Left cardiac atrium (tissue), 4 donors: ENCODE measurements at regions of chr9 and their contacts with region 1.

Region 1: DNA sequence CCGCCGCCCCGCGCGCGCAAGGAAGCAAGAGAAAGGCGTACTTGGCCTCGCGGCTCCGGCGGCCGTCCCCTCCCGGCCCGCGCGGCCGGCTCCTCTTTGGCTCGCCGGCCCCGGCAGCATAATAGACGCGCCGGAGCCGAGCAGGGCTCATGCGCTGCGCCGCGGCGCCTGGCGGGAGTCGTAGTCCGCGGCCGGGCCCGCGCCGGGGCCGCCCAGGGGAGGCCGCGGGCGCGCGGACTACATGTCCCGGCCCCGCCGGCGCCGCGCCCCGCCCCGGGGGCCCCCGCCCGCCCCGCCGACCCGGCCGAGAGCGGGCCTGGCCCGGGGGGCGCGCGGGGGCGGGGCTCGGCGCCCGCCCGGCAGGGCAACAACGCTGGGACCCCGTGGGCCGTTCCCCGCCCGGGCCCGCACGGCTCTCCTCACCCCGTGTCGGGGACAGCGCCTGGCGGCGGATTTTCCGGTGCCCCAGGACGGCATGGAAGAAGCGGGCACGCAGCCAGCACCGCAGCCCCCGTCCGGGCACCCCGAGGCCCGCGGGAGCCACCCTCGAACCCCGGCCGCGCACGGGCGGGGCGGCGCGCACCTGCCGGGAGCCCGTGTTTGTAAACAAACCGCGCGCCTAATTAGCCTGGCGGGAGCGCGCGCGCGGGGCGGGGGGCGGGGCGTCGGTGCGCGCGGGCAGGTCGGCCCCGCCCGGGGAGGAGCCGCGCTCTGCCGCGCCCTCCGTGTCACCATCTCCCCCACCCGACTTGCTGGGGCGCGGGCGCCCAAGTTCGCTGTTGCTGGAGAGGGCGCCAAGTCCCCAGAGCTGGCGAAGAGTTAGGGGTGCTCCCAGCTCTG is at the start of gene BRD3:
- DNase-seq: peak; percentile 89
- ATAC-seq: peak; percentile 88 to 91
- total RNA-seq, gene BRD3: 25.5 to 28.0 TPM

Region 2: GRCh38 chr9:134024828-134025605 is 43.1 kb before region 1 on chr9 and contains the start of gene BRD3OS:
- intact Hi-C with region 1: loop called in 1 of 2 experiments (anchors 5 kb)
- DNase-seq: peak; percentile 98
- ATAC-seq: peak; percentile 97
- total RNA-seq, gene BRD3OS: 7.0 to 7.9 TPM

Region 3: GRCh38 chr9:134135343-134136118 is 67.4 kb after region 1 on chr9 and contains the start of gene WDR5:
- intact Hi-C with region 1: loop called in 1 of 2 experiments (anchors 10 kb)
- DNase-seq: peak; percentile 95
- ATAC-seq: peak; percentile 87 to 89
- total RNA-seq, gene WDR5: 16.0 to 20.3 TPM